ENCODE measurements at regions of chr1 and their contacts with region 1.

Region 1: GRCh38 chr1:205977402-205978014 is 25.7 kb downstream of the RAB7B start:
- DNase-seq: peak; percentile 90
- ATAC-seq: peak; percentile 89
- H3K4me3 Mint-ChIP-seq: no peak overlapping the region
- H3K27ac Mint-ChIP-seq: no peak overlapping the region
- H3K4me1 Mint-ChIP-seq: no peaks in the 10 kb centered on the region
- H3K27me3 Mint-ChIP-seq: no peaks in the 10 kb centered on the region

Region 2: GRCh38 chr1:205591522-205592351 is 385.8 kb before region 1 on chr1:
- CTCF ChIA-PET with region 1: interaction called, 10 read pairs
- POLR2A ChIA-PET with region 1: no interaction called
- intact Hi-C with region 1: loop called in 1 of 2 experiments (anchors 2 kb)
- DNase-seq: peak; percentile 94
- ATAC-seq: peak; percentile 82
- H3K4me3 Mint-ChIP-seq: peak overlapping the region; percentile 78
- H3K27ac Mint-ChIP-seq: peak overlapping the region; percentile 78
- H3K4me1 Mint-ChIP-seq: peaks cover 35% of the 10 kb centered on the region
- H3K27me3 Mint-ChIP-seq: no peaks in the 10 kb centered on the region

Region 3: GRCh38 chr1:205791568-205792180 is 185.8 kb before region 1 on chr1:
- CTCF ChIA-PET with region 1: interaction called, 87 read pairs
- POLR2A ChIA-PET with region 1: no interaction called
- intact Hi-C with region 1: loop called (anchors 1 kb)
- DNase-seq: peak; percentile 75
- ATAC-seq: peak; percentile 99
- H3K4me3 Mint-ChIP-seq: no peak overlapping the region
- H3K27ac Mint-ChIP-seq: no peak overlapping the region
- H3K4me1 Mint-ChIP-seq: no peaks in the 10 kb centered on the region
- H3K27me3 Mint-ChIP-seq: no peaks in the 10 kb centered on the region

Region 4: DNA sequence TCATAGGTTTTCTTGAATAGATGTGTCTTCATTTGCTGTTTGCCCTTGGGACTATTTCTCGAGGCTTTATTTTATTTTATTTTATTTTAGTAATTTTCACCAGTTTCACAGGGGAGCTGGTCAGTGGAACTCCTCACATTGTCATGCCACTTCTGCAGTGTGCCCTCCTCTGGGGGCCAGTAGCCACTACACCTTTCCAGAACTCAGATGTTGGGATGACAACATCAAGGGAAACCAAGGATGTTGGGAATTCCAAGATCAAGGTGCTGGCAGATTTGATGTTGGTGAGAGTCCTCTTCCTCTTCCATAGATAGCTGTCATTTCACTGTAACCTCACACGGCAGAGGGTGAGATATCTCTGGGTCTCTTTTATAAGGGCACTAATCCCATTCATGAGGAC is 69.7 kb before region 1 on chr1:
- CTCF ChIA-PET with region 1: interaction called, 14 read pairs
- POLR2A ChIA-PET with region 1: no interaction called
- intact Hi-C with region 1: no loop called
- DNase-seq: no peak
- ATAC-seq: no peak
- H3K4me3 Mint-ChIP-seq: no peak overlapping the region
- H3K27ac Mint-ChIP-seq: no peak overlapping the region
- H3K4me1 Mint-ChIP-seq: no peaks in the 10 kb centered on the region
- H3K27me3 Mint-ChIP-seq: peaks cover 2% of the 10 kb centered on the region

Region 5: DNA sequence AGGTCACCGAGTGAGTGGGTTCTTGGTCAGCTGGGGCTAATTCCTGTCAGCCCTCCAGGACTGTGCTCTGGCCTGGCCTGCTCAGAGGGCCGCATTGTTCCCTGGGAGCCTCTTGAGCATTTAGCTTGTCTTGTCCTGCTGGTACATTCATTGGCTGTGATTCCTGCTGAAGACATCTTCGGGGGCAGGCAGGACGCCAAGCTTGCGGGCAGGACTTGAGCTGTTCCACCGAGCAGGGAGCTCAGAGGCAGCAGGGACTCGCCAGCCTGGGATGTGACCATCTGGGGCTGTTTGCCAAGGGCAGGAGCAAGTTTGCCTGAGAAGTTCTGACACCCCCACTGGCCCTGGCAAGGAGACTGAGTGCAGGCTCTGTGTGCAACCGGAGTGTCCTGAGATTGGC is 27.2 kb before region 1 on chr1:
- CTCF ChIA-PET with region 1: interaction called, 11 read pairs
- POLR2A ChIA-PET with region 1: no interaction called
- intact Hi-C with region 1: no loop called
- DNase-seq: no peak
- ATAC-seq: no peak
- H3K4me3 Mint-ChIP-seq: no peak overlapping the region
- H3K27ac Mint-ChIP-seq: no peak overlapping the region
- H3K4me1 Mint-ChIP-seq: no peaks in the 10 kb centered on the region
- H3K27me3 Mint-ChIP-seq: no peaks in the 10 kb centered on the region

Region 6: GRCh38 chr1:206030714-206031113 is 53.2 kb after region 1 on chr1:
- CTCF ChIA-PET with region 1: interaction called, 14 read pairs
- POLR2A ChIA-PET with region 1: no interaction called
- intact Hi-C with region 1: no loop called
- DNase-seq: peak; percentile 87
- ATAC-seq: peak; percentile 98
- H3K4me3 Mint-ChIP-seq: no peak overlapping the region
- H3K27ac Mint-ChIP-seq: no peak overlapping the region
- H3K4me1 Mint-ChIP-seq: peaks cover 10% of the 10 kb centered on the region
- H3K27me3 Mint-ChIP-seq: peaks cover 21% of the 10 kb centered on the region

Region 7: DNA sequence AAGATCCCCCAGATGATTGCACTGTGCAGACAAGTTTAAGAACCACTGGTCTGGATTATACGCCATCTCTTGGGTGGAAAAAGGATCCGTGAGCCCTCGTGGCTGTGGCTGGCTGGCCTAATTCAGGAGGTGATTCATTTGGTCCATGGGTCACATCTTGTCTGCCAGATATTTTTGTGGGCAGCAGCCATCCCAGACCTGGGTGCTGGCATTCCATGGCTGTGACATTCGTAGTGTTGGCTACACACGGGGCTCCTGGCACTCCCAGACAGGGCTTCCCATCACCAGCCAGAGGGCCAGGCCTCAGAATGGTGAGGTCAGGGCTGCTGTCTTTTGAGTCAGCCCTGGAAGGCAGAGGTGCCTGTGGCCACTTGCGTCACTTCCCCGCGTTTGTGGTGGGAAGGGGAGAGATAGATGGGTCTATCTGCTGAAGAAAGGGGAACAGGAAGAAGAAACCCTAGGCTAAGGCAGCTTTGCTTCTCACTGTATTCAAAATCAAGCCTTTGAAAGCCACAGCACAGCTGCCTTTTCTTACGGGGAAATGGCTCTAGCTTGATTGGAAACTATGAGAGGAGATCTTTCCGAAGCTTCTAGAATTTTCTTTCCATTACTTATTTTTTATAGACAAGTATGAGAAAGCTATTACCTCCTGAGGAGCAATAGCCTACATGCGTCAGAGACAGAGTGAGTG is 602.4 kb after region 1 on chr1:
- CTCF ChIA-PET with region 1: no interaction called
- POLR2A ChIA-PET with region 1: no interaction called
- intact Hi-C with region 1: no loop called
- DNase-seq: peak; percentile 96
- ATAC-seq: peak; percentile 54
- H3K4me3 Mint-ChIP-seq: peak overlapping the region; percentile 72
- H3K27ac Mint-ChIP-seq: peak overlapping the region; percentile 99
- H3K4me1 Mint-ChIP-seq: peaks cover 99% of the 10 kb centered on the region
- H3K27me3 Mint-ChIP-seq: no peaks in the 10 kb centered on the region

Measured in activated CD4-positive, alpha-beta T cell treated with anti-CD3 and anti-CD28 coated beads for 36 hours (primary cell).